OCI-LY7 (cell line): ENCODE measurements at regions of chr6 and their contacts with region 1.

Region 1: GRCh38 chr6:37018198-37019064 is 13.0 kb downstream of the FGD2 start:
- DNase-seq: peak; percentile 91
- H3K4me3 ChIP-seq: no peak overlapping the region
- H3K27ac ChIP-seq: no peak overlapping the region
- H3K4me1 ChIP-seq: peaks cover 13% of the 10 kb centered on the region
- CTCF ChIP-seq: peak; percentile 93

Region 2: DNA sequence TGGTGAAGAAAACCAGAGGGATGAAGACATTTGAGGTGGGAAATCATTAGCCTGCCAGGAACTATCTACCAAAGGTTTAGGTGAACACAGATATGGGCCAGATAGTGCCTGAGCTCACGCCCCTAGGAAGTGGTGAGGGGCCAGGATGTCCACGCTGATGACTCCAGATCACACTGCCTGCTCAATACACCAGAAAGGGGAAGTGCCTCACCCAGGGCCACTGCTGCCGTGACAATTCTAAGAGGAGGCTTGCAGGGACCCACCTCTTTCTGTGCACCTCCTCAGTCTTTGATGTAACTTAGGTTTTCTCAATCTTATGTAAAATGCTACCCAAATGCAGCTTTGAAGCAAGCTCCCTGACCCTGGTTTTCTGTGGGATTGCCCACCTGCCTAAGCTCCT is 326.2 kb before region 1 on chr6:
- CTCF ChIA-PET with region 1: no interaction called
- POLR2A ChIA-PET with region 1: no interaction called
- intact Hi-C with region 1: no loop called
- DNase-seq: peak; percentile 85
- H3K4me3 ChIP-seq: no peak overlapping the region
- H3K27ac ChIP-seq: no peak overlapping the region
- H3K4me1 ChIP-seq: peaks cover 38% of the 10 kb centered on the region
- CTCF ChIP-seq: no peak

Region 3: GRCh38 chr6:36780442-36781177 is 237.8 kb before region 1 on chr6:
- CTCF ChIA-PET with region 1: no interaction called
- POLR2A ChIA-PET with region 1: no interaction called
- intact Hi-C with region 1: loop called (anchors 5 kb)
- DNase-seq: peak; percentile 26
- H3K4me3 ChIP-seq: no peak overlapping the region
- H3K27ac ChIP-seq: no peak overlapping the region
- H3K4me1 ChIP-seq: peaks cover 21% of the 10 kb centered on the region
- CTCF ChIP-seq: no peak

Region 4: GRCh38 chr6:36962874-36963273 is 55.6 kb before region 1 on chr6:
- CTCF ChIA-PET with region 1: interaction called, 11 read pairs
- POLR2A ChIA-PET with region 1: no interaction called
- intact Hi-C with region 1: no loop called
- DNase-seq: peak; percentile 72
- H3K4me3 ChIP-seq: peak overlapping the region; percentile 40
- H3K27ac ChIP-seq: no peak overlapping the region
- H3K4me1 ChIP-seq: peaks cover 26% of the 10 kb centered on the region
- CTCF ChIP-seq: no peak

Region 5: GRCh38 chr6:37005061-37005810 is 13.2 kb before region 1 on chr6 and contains the start of gene FGD2:
- CTCF ChIA-PET with region 1: interaction called, 19 read pairs
- POLR2A ChIA-PET with region 1: interaction called, 12 read pairs
- intact Hi-C with region 1: no loop called
- DNase-seq: peak; percentile 90
- H3K4me3 ChIP-seq: peak within 1 kb of the TSS; percentile 70
- H3K27ac ChIP-seq: peak within 1 kb of the TSS; percentile 70
- H3K4me1 ChIP-seq: peaks cover 65% of the 10 kb centered on the region
- CTCF ChIP-seq: no peak
- total RNA-seq, gene FGD2: 23.8 and 27.8 TPM in 2 replicates

Region 6: GRCh38 chr6:37169496-37170272 is 151.3 kb after region 1 on chr6 and contains the start of gene PIM1:
- CTCF ChIA-PET with region 1: interaction called, 4 read pairs
- POLR2A ChIA-PET with region 1: no interaction called
- intact Hi-C with region 1: loop called (anchors 1 kb)
- DNase-seq: peak; percentile 97
- H3K4me3 ChIP-seq: peak within 1 kb of the TSS; percentile 96
- H3K27ac ChIP-seq: peak within 1 kb of the TSS; percentile 71
- H3K4me1 ChIP-seq: peaks cover 19% of the 10 kb centered on the region
- CTCF ChIP-seq: no peak
- total RNA-seq, gene PIM1: 27.4 and 31.4 TPM in 2 replicates